ENCODE measurements at regions of chr19 and their contacts with region 1.

Region 1: DNA sequence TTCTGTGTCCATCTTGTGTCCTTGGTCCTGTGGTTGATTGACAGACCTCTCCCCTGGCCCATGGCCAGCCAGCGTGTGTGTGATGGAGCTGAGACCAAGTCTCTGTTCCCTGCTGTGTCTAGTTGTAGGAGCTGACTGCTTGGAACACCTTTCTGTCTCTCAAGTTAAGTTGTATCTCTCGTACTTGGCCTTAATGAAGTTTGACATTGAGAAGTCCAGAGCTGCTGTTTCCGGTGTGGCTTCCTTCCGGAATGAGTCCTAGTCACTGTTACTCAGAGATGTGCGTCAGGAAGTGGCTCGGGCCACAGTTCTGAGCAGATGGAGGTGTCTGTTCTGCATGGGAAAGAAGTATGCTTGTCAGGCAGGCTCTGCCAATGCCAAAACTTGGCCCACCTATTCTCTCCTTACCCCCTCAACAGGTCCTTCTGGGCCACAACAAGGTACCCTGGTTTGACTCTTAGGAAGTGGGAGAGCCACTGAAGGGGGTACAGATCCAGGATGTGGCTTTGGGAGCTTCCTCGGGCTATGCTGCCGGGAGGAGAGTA is 54.3 kb downstream of the GATAD2A start:
- DNase-seq: peak; percentile 63 to 89 (median 67)
- H3K4me3 ChIP-seq: peak overlapping the region; percentile 54 to 87
- H3K4me3 Mint-ChIP-seq: peak overlapping the region; percentile 86 to 95 (median 90)
- H3K27ac ChIP-seq: peak overlapping the region; percentile 79
- H3K27ac Mint-ChIP-seq: peak overlapping the region; percentile 96 to 100 (median 99)
- H3K4me1 ChIP-seq: peaks cover 88% of the 10 kb centered on the region
- H3K4me1 Mint-ChIP-seq: peaks cover 55 to 91% (median 75%) of the 10 kb centered on the region in 4 donors
- H3K27me3 ChIP-seq: no peaks in the 10 kb centered on the region
- H3K27me3 Mint-ChIP-seq: no peaks in the 10 kb centered on the region

Region 2: GRCh38 chr19:19372656-19373416 is 86.9 kb before region 1 on chr19:
- CTCF ChIA-PET with region 1: no interaction called
- POLR2A ChIA-PET with region 1: interaction called, 14 read pairs
- intact Hi-C with region 1: no loop called
- DNase-seq: peak; percentile 40 to 58 (median 52)
- H3K4me3 ChIP-seq: no peak overlapping the region
- H3K4me3 Mint-ChIP-seq: peak overlapping the region in 7 of 8 donors; percentile 50 to 73 (median 54)
- H3K27ac ChIP-seq: peak overlapping the region; percentile 63
- H3K27ac Mint-ChIP-seq: peak overlapping the region; percentile 79 to 95 (median 92)
- H3K4me1 ChIP-seq: peaks cover 18% of the 10 kb centered on the region
- H3K4me1 Mint-ChIP-seq: peaks cover 6 to 14% (median 9%) of the 10 kb centered on the region in 4 donors
- H3K27me3 ChIP-seq: no peaks in the 10 kb centered on the region
- H3K27me3 Mint-ChIP-seq: no peaks in the 10 kb centered on the region

Region 3: DNA sequence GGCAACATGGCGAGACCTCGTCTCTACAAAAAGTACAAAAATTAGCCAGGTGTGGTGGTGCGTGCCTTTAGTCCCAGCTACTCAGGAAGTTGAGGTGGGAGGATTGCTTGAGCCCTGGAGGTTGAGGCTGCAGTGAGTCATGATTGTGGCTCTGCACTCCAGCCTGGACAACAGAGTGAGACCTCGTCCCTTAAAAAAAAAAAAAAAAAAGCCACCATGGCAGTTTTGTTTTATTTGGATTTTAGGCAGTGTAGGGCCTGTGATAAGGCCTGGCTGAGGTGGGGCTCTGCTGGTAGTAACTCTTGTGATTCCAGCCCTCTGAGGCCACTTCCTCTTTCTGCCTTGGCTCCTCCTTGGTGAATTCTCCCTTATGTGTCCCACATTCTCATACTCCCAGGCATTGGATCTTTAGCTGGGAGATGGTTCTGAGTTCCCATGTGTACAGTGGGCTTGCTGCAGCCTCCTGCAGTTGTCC is 15.1 kb before region 1 on chr19:
- CTCF ChIA-PET with region 1: no interaction called
- POLR2A ChIA-PET with region 1: interaction called, 24 read pairs
- intact Hi-C with region 1: loop called (anchors 1 kb)
- DNase-seq: peak in 1 of 5 donors; percentile 63
- H3K4me3 ChIP-seq: no peak overlapping the region
- H3K4me3 Mint-ChIP-seq: peak overlapping the region in 7 of 8 donors; percentile 14 to 84 (median 50)
- H3K27ac ChIP-seq: peak overlapping the region; percentile 44
- H3K27ac Mint-ChIP-seq: peak overlapping the region; percentile 79 to 96 (median 91)
- H3K4me1 ChIP-seq: peaks cover 61% of the 10 kb centered on the region
- H3K4me1 Mint-ChIP-seq: peaks cover 49 to 80% (median 65%) of the 10 kb centered on the region in 4 donors
- H3K27me3 ChIP-seq: no peaks in the 10 kb centered on the region
- H3K27me3 Mint-ChIP-seq: no peaks in the 10 kb centered on the region

Region 4: GRCh38 chr19:19475849-19476828 is 16.4 kb after region 1 on chr19:
- CTCF ChIA-PET with region 1: interaction called, 8 read pairs
- POLR2A ChIA-PET with region 1: interaction called, 18 read pairs
- intact Hi-C with region 1: loop called (anchors 2 kb)
- DNase-seq: peak in 2 of 5 donors; percentile 12 to 23
- H3K4me3 ChIP-seq: no peak overlapping the region
- H3K4me3 Mint-ChIP-seq: peak overlapping the region in 7 of 8 donors; percentile 40 to 82 (median 60)
- H3K27ac ChIP-seq: peak overlapping the region; percentile 43
- H3K27ac Mint-ChIP-seq: peak overlapping the region; percentile 85 to 95 (median 88)
- H3K4me1 ChIP-seq: peaks cover 99% of the 10 kb centered on the region
- H3K4me1 Mint-ChIP-seq: peaks cover 57 to 95% (median 81%) of the 10 kb centered on the region in 4 donors
- H3K27me3 ChIP-seq: no peaks in the 10 kb centered on the region
- H3K27me3 Mint-ChIP-seq: no peaks in the 10 kb centered on the region

Region 5: DNA sequence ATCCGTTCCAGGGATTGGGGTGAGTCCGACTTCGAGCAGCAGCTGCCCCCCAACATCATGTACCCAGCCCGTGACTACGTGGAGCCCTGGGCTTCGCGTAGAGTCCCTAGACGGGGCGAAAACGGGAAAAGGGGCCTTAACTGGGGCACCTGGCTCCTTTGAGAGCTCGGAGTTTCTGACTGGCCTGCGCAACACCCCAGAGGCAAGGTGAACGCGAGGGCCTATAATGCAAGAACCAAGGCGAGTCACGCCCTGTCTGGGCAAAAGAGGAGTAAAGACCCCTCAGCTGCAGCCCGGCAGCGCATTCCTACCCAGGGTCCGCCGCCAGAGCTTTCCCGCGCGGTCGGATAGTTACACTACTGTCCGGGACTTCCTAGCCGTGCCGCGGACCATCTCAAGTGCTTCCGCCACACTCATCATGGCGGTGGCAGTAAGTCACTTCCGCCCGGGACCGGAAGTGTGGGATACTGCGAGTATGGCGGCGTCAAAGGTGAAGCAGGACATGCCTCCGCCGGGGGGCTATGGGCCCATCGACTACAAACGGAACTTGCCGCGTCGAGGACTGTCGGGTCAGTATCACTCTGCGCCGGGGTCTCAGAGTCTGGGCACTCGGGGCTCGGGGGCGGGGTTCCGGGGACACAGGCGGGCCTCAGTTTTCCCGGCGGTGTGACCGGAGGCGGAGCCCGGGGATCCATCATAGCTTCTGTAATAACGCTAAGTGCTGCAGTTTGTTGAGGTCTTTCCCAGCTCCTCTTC is 56.2 kb after region 1 on chr19 and contains the start of gene NDUFA13:
- CTCF ChIA-PET with region 1: no interaction called
- POLR2A ChIA-PET with region 1: interaction called, 14 read pairs
- intact Hi-C with region 1: no loop called
- DNase-seq: peak; percentile 91 to 95 (median 92)
- H3K4me3 ChIP-seq: peak within 1 kb of the TSS; percentile 88 to 90
- H3K4me3 Mint-ChIP-seq: peak within 1 kb of the TSS; percentile 93 to 99 (median 97)
- H3K27ac ChIP-seq: peak within 1 kb of the TSS; percentile 92
- H3K27ac Mint-ChIP-seq: peak within 1 kb of the TSS; percentile 94 to 98 (median 97)
- H3K4me1 ChIP-seq: peaks cover 35% of the 10 kb centered on the region
- H3K4me1 Mint-ChIP-seq: peaks cover 16 to 47% (median 29%) of the 10 kb centered on the region in 4 donors
- H3K27me3 ChIP-seq: no peaks in the 10 kb centered on the region
- H3K27me3 Mint-ChIP-seq: no peaks in the 10 kb centered on the region
- total RNA-seq, gene NDUFA13: 191 to 199 TPM

Measured in CD4-positive, alpha-beta memory T cell (primary cell).